Activated naive CD4-positive, alpha-beta T cell treated with anti-CD3 and anti-CD28 coated beads for 36 hours (primary cell): ENCODE measurements at regions of chr1 and their contacts with region 1.

Region 1: GRCh38 chr1:12296623-12297022 is 66.8 kb downstream of the VPS13D start:
- DNase-seq: no peak
- H3K4me3 Mint-ChIP-seq: no peak overlapping the region
- H3K27ac Mint-ChIP-seq: peak overlapping the region; percentile 51
- H3K4me1 Mint-ChIP-seq: peaks cover 30% of the 10 kb centered on the region
- H3K27me3 Mint-ChIP-seq: no peaks in the 10 kb centered on the region

Region 2: GRCh38 chr1:12161662-12162458 is 134.8 kb before region 1 on chr1:
- CTCF ChIA-PET with region 1: no interaction called
- intact Hi-C with region 1: no loop called
- DNase-seq: peak; percentile 92
- H3K4me3 Mint-ChIP-seq: no peak overlapping the region
- H3K27ac Mint-ChIP-seq: peak overlapping the region; percentile 83
- H3K4me1 Mint-ChIP-seq: peaks cover 70% of the 10 kb centered on the region
- H3K27me3 Mint-ChIP-seq: no peaks in the 10 kb centered on the region

Region 3: DNA sequence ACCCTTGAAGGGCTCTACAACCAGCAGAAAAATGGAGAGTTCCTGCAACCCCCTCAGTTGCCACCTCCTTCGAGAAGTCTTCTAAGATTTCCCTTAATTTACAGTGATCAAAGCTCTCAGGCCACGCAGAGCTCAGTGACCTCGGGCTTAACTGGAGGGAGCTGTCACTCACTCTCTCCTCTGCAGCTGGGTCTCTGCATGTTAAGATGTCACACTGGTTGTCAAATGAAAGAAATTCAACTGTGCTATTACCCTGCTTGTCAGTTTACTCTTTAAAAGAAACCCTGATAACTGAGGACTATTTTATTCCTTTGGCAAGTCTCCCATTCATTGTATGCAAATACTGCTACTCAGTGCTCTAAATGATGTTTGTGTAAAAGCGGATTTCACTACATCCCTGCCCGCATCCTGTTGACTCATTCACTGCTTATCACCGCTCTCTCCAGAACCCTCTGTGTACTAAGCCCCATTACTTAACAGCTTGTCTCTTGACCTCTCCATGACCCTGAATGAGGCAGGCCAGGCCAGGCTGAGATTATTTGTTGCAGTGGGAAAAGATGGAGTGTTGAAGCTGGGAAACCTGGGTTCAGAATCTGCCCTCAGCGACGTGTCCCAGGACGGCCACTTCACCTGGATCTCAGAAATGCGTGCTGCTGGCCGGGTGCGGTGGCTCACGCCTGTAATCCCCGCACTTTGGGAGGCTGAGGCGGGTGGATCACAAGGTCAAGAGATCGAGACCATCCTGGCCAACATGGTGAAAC is 307.7 kb after region 1 on chr1:
- CTCF ChIA-PET with region 1: no interaction called
- intact Hi-C with region 1: loop called (anchors 1 kb)
- DNase-seq: peak; percentile 90
- H3K4me3 Mint-ChIP-seq: peak overlapping the region; percentile 10
- H3K27ac Mint-ChIP-seq: peak overlapping the region; percentile 79
- H3K4me1 Mint-ChIP-seq: peaks cover 71% of the 10 kb centered on the region
- H3K27me3 Mint-ChIP-seq: no peaks in the 10 kb centered on the region